OCI-LY7 (cell line): ENCODE measurements at regions of chr3 and their contacts with region 1.

Region 1: DNA sequence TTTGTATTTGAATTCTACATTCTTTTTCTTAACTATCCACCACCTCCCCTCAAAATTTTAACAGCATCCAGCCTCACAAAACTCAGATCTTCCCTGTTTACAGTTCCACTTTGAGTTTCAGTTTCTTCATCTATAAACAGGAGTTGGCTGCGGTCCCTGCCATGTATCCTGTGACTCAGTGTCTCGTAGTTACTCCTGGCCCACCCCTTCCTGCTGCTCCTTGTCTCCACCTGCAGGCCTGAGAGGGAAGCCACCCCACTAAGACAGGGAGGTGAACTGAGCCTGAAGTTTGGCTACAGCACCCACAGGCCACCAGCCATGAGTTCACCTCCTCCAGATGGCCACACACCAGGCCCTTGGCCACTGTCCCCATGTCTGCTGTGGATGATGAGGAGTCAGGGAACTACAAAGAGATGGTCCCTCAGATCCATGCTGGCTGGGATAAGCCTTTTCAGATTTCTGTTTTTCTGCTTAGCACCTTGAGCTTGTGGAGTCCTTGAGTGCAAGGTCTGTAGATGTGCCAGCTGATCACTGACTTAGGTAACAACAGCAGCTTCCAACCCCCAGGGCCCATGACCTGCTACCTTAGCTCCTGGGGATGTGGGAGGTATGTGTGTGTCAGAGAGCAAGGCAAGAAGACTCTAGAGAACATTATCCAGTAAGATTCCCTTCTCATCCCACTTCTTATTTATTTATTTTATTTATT is 37.5 kb downstream of the CD86 start:
- DNase-seq: peak; percentile 56
- H3K4me3 ChIP-seq: peak overlapping the region; percentile 49
- H3K27ac ChIP-seq: peak overlapping the region; percentile 82
- H3K4me1 ChIP-seq: peaks cover 68% of the 10 kb centered on the region
- CTCF ChIP-seq: peak; percentile 87

Region 2: DNA sequence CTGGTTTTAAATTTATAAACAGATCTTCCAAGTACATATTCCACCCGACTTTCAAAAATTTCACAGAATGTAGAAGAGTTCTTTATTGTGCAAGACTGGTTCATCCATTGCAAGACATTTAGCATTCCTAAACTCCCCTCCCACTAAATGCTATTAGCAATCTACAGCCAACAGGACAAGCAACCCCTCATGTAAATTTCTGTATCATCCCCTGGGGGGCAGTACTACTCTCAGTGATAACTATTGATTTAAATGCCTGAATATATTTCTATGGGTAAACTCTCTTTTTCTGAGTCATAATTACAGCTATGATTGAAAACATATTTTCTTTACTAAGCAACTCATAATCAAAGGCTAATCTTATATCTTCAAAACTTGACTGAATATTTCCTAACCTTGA is 209.1 kb before region 1 on chr3:
- CTCF ChIA-PET with region 1: no interaction called
- POLR2A ChIA-PET with region 1: interaction called, 3 read pairs
- intact Hi-C with region 1: loop called (anchors 10 kb)
- DNase-seq: peak; percentile 42
- H3K4me3 ChIP-seq: no peak overlapping the region
- H3K27ac ChIP-seq: no peak overlapping the region
- H3K4me1 ChIP-seq: no peaks in the 10 kb centered on the region
- CTCF ChIP-seq: peak; percentile 87

Region 3: DNA sequence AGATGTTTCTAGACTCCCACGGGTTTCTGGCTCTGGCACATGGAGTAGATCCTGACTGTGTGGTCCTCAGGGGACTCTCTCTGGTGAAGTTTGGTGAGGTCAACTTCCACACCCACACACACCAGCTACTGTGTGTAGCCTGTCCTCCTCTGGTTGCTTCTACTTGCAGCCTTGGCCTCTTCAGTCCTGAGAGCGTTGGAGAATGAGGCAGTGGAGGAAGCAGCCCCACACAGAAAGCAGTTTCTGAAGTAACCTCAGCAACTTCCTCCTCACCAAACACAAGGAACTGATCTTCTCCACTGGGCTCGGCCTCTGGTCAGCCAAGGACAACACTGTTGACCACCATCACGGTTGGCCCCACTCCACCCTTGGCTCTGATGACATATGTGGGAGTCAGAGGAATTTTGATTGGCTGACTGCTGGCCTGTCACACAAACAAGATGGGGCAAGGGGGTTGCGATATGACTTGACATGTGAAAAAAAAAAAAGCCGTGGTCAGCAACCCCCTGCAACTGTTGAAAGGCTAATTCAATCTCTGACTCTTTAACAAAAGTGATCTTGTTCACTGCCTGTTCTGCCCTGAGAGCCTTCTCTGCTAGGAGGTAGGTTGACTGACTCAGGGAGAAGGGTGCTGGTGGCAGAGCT is 17.9 kb before region 1 on chr3:
- CTCF ChIA-PET with region 1: interaction called, 6 read pairs
- POLR2A ChIA-PET with region 1: interaction called, 45 read pairs
- intact Hi-C with region 1: no loop called
- DNase-seq: peak; percentile 64
- H3K4me3 ChIP-seq: peak overlapping the region; percentile 71
- H3K27ac ChIP-seq: peak overlapping the region; percentile 81
- H3K4me1 ChIP-seq: peaks cover 69% of the 10 kb centered on the region
- CTCF ChIP-seq: no peak